Activated B cell treated with CpG ODN at 0.5 μM for 24 hours (primary cell): ENCODE measurements at regions of chr5 and their contacts with region 1.

Region 1: DNA sequence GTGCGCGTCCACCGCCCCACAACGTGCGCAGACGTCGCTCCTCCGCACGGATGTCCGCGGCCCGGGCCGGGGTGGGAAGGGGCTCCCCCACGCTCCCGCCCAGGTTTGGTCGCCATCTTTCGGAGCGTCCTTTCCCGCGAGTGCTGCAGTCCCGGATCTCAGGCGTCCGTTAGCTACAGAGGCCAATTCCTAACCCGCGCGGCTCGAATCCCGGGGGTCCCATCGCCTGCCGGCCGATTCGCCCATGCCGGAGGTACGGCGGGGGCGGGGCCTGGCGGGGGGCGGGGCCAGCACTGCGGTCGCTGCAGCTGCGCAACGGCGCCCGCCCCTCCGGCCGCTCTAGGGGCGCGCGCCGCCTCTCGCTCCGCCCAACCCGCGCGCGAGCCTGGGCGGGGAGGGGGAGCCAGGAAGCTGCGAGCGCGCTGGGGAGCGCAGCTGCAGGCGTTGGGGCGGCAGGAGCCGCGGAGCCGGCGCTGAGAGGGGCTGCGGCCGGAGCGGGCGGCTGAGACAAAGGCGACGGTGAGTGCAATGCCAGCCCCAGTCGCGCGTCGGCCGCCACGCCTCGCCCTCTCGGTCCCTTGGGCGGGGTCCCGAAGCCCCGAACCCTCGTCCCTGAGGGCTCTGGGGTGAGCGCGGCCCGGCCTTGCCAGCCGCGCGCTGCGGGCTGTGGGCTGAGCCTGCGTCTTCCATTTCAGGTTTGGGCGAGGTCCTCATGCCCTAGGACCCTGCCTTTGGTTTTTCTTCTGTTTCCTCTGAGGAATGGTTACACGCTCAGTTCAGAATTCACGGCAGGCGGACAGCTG is at the start of gene CDC42SE2:
- DNase-seq: peak; percentile 94
- ATAC-seq: peak; percentile 86
- H3K4me3 Mint-ChIP-seq: peak within 1 kb of the TSS; percentile 90
- H3K27ac Mint-ChIP-seq: peak within 1 kb of the TSS; percentile 96
- H3K4me1 Mint-ChIP-seq: peaks cover 45% of the 10 kb centered on the region
- H3K27me3 Mint-ChIP-seq: no peaks in the 10 kb centered on the region
- CTCF ChIP-seq: no peak
- total RNA-seq, gene CDC42SE2: 114 and 122 TPM in 2 replicates

Region 2: GRCh38 chr5:130978475-130978874 is 285.4 kb before region 1 on chr5:
- CTCF ChIA-PET with region 1: no interaction called
- POLR2A ChIA-PET with region 1: no interaction called
- intact Hi-C with region 1: no loop called
- DNase-seq: no peak
- ATAC-seq: no peak
- H3K4me3 Mint-ChIP-seq: no peak overlapping the region
- H3K27ac Mint-ChIP-seq: no peak overlapping the region
- H3K4me1 Mint-ChIP-seq: no peaks in the 10 kb centered on the region
- H3K27me3 Mint-ChIP-seq: peaks cover 18% of the 10 kb centered on the region
- CTCF ChIP-seq: no peak

Region 3: DNA sequence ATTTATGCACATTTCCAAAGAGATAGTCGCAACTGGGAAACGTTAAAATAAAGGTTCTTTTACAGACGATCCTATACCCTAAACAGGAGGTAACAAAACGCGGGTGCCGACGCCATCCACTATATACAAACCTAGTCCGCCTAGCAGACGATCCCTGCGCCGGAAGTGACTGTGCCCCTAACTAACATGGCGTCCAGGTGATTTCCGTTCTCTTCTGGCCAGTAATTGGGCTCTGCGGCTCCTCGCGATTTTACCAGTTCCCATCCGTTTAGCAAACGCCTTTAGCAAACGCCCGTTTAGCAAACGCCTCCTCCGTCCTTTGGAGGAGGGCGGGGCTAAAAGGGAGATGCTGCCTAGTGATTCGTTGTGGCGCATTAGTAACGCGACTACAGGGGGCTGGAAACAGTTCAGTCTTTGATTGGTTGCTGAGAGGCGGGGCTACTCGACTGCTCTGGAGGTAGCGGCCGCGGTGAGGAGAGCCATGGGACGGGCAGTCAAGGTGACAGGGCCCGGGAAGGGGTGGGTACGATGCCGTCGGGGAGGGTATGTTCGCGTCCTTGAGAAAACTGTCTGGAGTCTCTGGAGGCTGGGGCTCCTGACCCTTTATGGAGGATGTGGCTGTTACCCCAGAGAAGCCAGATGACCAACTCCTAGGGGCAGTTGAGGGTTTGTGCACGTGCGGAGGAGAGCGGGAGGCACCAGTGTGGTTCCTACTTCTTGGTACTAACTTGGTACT is 93.1 kb before region 1 on chr5 and contains the start of gene LYRM7:
- CTCF ChIA-PET with region 1: no interaction called
- POLR2A ChIA-PET with region 1: interaction called, 26 read pairs
- intact Hi-C with region 1: loop called (anchors 1 kb)
- DNase-seq: peak; percentile 80
- ATAC-seq: peak; percentile 96
- H3K4me3 Mint-ChIP-seq: peak within 1 kb of the TSS; percentile 98
- H3K27ac Mint-ChIP-seq: peak within 1 kb of the TSS; percentile 93
- H3K4me1 Mint-ChIP-seq: peaks cover 42% of the 10 kb centered on the region
- H3K27me3 Mint-ChIP-seq: no peaks in the 10 kb centered on the region
- CTCF ChIP-seq: no peak
- total RNA-seq, gene LYRM7: 11.9 and 13.1 TPM in 2 replicates

Region 4: DNA sequence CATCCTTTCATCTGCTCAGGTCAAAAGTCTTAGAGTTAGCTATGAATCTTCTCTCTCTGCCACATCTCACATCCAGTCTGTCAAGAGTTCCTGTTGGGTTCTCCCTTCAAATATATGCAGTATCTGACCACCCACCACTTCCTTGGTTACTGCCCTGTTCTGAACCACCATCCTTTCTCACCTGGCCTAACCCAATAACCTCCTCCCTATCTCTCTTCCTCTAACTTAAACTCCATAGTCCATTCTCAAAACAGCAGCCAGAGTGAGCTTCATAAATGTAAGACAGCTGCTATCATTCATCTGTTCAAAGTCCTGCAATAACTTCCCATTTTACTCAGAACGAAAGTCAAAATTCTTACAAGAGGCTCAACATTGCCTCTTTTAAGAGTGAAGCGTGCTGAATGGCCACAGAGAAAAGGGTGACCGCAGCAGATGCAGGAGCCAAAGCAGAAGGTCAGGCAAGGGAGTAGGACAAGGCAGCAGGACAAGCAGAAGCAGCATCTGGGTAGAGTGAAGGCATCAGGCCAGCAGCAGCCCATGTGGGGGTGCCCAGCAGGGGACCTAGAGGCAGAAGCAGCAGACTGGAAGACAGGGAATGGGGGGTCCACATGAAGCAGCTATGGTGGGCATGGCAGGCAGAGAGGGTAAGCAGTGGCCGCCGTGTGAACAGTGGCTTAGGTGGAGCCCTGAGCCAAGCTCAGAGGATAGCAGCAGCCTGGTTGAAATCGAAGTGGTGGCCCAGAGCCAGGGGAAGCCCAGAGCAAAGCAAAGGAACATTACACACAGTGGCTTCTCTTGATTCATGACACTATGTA is 39.3 kb before region 1 on chr5:
- CTCF ChIA-PET with region 1: interaction called, 5 read pairs
- POLR2A ChIA-PET with region 1: interaction called, 71 read pairs
- intact Hi-C with region 1: loop called (anchors 1 kb)
- DNase-seq: peak; percentile 33
- ATAC-seq: peak; percentile 84
- H3K4me3 Mint-ChIP-seq: no peak overlapping the region
- H3K27ac Mint-ChIP-seq: no peak overlapping the region
- H3K4me1 Mint-ChIP-seq: peaks cover 27% of the 10 kb centered on the region
- H3K27me3 Mint-ChIP-seq: no peaks in the 10 kb centered on the region
- CTCF ChIP-seq: no peak

Region 5: GRCh38 chr5:131274326-131275063 is 10.6 kb after region 1 on chr5:
- CTCF ChIA-PET with region 1: interaction called, 10 read pairs
- POLR2A ChIA-PET with region 1: interaction called, 94 read pairs
- intact Hi-C with region 1: loop called (anchors 1 kb)
- DNase-seq: no peak
- ATAC-seq: no peak
- H3K4me3 Mint-ChIP-seq: peak overlapping the region; percentile 59
- H3K27ac Mint-ChIP-seq: peak overlapping the region; percentile 80
- H3K4me1 Mint-ChIP-seq: peaks cover 90% of the 10 kb centered on the region
- H3K27me3 Mint-ChIP-seq: no peaks in the 10 kb centered on the region
- CTCF ChIP-seq: no peak

Region 6: DNA sequence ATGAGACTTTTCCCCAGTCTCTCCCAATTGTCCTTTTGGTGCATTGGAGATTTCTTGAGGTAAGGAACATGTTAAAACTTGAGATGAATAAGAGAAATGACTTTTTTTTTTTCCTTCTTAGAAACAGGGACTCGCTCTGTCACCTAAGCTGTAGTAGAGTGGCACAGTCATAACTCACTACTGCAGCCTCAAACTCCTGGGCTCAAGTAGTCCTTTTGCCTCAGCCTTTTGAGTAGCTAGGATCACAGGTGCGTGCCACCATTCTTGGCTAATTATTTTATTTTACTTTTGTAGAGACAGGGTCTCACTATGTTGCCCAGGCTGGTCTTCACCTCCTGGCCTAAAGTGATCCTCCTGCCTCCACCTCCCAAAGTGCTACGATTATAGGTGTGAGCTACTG is 25.9 kb after region 1 on chr5:
- CTCF ChIA-PET with region 1: interaction called, 3 read pairs
- POLR2A ChIA-PET with region 1: interaction called, 20 read pairs
- intact Hi-C with region 1: no loop called
- DNase-seq: no peak
- ATAC-seq: peak; percentile 55
- H3K4me3 Mint-ChIP-seq: peak overlapping the region; percentile 24
- H3K27ac Mint-ChIP-seq: peak overlapping the region; percentile 84
- H3K4me1 Mint-ChIP-seq: peaks cover 64% of the 10 kb centered on the region
- H3K27me3 Mint-ChIP-seq: no peaks in the 10 kb centered on the region
- CTCF ChIP-seq: no peak

Region 7: DNA sequence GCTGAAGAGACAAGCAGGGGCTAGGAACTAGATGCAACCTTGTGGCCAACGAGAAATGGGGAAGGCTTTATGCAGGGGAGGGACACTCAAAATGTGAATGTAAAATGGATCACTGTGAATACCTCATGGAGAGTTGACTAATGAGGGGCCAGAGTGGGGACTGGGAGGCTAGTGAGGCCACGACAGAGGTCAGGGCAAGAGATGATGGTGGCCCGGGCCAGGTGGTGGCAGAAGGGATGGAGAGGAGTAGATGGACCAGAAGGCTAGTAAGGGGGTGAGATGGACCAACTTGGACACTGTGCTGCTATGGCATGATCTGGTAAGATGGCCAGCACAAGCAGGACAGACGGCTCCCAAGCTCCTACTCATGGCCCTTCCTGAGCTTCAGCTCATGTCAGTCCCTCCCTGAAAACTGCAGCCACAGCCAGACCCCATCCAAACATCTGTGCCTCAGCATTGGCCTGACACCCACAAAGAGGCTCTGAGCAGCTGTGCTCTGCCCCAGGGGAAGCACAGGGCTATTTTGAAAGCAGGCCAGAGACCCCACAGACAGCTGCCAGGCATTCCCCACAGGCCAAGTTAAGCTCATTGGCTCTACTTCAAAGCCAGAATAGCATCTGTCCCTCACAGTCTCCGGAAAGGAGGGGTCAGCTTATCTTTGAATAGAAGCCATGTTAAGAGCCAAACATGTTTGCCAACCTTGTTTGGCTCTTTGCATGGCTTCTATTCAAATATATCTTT is 941.7 kb after region 1 on chr5:
- CTCF ChIA-PET with region 1: no interaction called
- POLR2A ChIA-PET with region 1: no interaction called
- intact Hi-C with region 1: no loop called
- DNase-seq: no peak
- ATAC-seq: no peak
- H3K4me3 Mint-ChIP-seq: no peak overlapping the region
- H3K27ac Mint-ChIP-seq: no peak overlapping the region
- H3K4me1 Mint-ChIP-seq: peaks cover 3% of the 10 kb centered on the region
- H3K27me3 Mint-ChIP-seq: no peaks in the 10 kb centered on the region
- CTCF ChIP-seq: no peak